ENCODE measurements at regions of chr10 and their contacts with region 1.

Region 1: GRCh38 chr10:30186371-30186875 is 127.0 kb upstream of the JCAD start:
- DNase-seq: no peak
- ATAC-seq: no peak
- H3K4me3 ChIP-seq: no peak overlapping the region
- H3K27ac ChIP-seq: no peak overlapping the region; the same call in 1 of the 2 replicates
- H3K4me1 ChIP-seq: peaks cover 35% of the 10 kb centered on the region
- H3K27me3 ChIP-seq: no peaks in the 10 kb centered on the region
- CTCF ChIP-seq: peak; percentile 41

Region 2: GRCh38 chr10:30111340-30112022 is 74.9 kb before region 1 on chr10:
- CTCF ChIA-PET with region 1: no interaction called
- POLR2A ChIA-PET with region 1: no interaction called
- intact Hi-C with region 1: loop called (anchors 1 kb)
- DNase-seq: peak; percentile 91
- ATAC-seq: peak; percentile 95
- H3K4me3 ChIP-seq: no peak overlapping the region
- H3K27ac ChIP-seq: peak overlapping the region; percentile 75
- H3K4me1 ChIP-seq: peaks cover 23% of the 10 kb centered on the region
- H3K27me3 ChIP-seq: no peaks in the 10 kb centered on the region
- CTCF ChIP-seq: no peak

Measured in PC-3 (cell line).